ENCODE measurements at regions of chr6 and their contacts with region 1.

Region 1: GRCh38 chr6:135707426-135707825 is 144.1 kb upstream of the PDE7B start:
- DNase-seq: no peak
- H3K4me3 ChIP-seq: no peak overlapping the region
- H3K4me3 Mint-ChIP-seq: no peak overlapping the region
- H3K27ac Mint-ChIP-seq: no peak overlapping the region
- H3K4me1 ChIP-seq: no peaks in the 10 kb centered on the region
- H3K4me1 Mint-ChIP-seq: no peaks in the 10 kb centered on the region
- H3K27me3 ChIP-seq: 0 out of 2 replicates have a peak, but pooled peaks cover 2% of the 10 kb centered on the region
- H3K27me3 Mint-ChIP-seq: peaks cover 19% of the 10 kb centered on the region
- CTCF ChIP-seq: no peak

Region 2: GRCh38 chr6:135627092-135627715 is 80.2 kb before region 1 on chr6:
- CTCF ChIA-PET with region 1: no interaction called
- POLR2A ChIA-PET with region 1: no interaction called
- intact Hi-C with region 1: no loop called
- DNase-seq: no peak
- H3K4me3 ChIP-seq: no peak overlapping the region
- H3K4me3 Mint-ChIP-seq: no peak overlapping the region
- H3K27ac Mint-ChIP-seq: no peak overlapping the region
- H3K4me1 ChIP-seq: peaks cover 6% of the 10 kb centered on the region; the same call in 1 of the 2 replicates
- H3K4me1 Mint-ChIP-seq: no peaks in the 10 kb centered on the region
- H3K27me3 ChIP-seq: no peaks in the 10 kb centered on the region
- H3K27me3 Mint-ChIP-seq: peaks cover 3% of the 10 kb centered on the region
- CTCF ChIP-seq: no peak

Region 3: DNA sequence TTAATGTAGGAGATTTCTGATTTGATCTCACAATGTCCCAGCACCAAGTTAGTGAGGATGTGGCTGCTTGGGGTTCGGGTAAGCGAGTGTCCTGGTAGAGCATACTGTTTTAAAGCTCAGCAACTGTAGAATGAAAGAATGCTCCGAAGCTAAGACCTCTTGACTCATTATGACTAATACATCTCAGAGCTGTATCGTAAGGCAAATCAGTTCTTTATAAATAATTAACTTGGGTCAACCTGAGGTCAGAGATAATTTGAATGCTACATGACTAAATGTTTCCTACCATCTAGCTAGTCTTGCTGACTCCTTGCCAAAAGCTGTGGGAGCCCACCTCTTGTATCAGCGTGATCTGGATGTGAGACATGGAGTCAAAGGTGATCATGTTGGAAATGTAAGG is 15.3 kb after region 1 on chr6:
- CTCF ChIA-PET with region 1: no interaction called
- POLR2A ChIA-PET with region 1: no interaction called
- intact Hi-C with region 1: no loop called
- DNase-seq: no peak
- H3K4me3 ChIP-seq: no peak overlapping the region
- H3K4me3 Mint-ChIP-seq: no peak overlapping the region
- H3K27ac Mint-ChIP-seq: no peak overlapping the region
- H3K4me1 ChIP-seq: no peaks in the 10 kb centered on the region
- H3K4me1 Mint-ChIP-seq: no peaks in the 10 kb centered on the region
- H3K27me3 ChIP-seq: no peaks in the 10 kb centered on the region
- H3K27me3 Mint-ChIP-seq: no peaks in the 10 kb centered on the region
- CTCF ChIP-seq: no peak

Region 4: GRCh38 chr6:135750081-135750480 is 42.7 kb after region 1 on chr6:
- CTCF ChIA-PET with region 1: no interaction called
- POLR2A ChIA-PET with region 1: no interaction called
- intact Hi-C with region 1: loop called (anchors 1 kb)
- DNase-seq: no peak
- H3K4me3 ChIP-seq: no peak overlapping the region
- H3K4me3 Mint-ChIP-seq: no peak overlapping the region
- H3K27ac Mint-ChIP-seq: no peak overlapping the region
- H3K4me1 ChIP-seq: no peaks in the 10 kb centered on the region; the same call in 1 of the 2 replicates
- H3K4me1 Mint-ChIP-seq: no peaks in the 10 kb centered on the region
- H3K27me3 ChIP-seq: no peaks in the 10 kb centered on the region
- H3K27me3 Mint-ChIP-seq: no peaks in the 10 kb centered on the region
- CTCF ChIP-seq: no peak